SK-N-SH (cell line): ENCODE measurements at regions of chr12 and their contacts with region 1.

Region 1: GRCh38 chr12:18158774-18159557 is 69.0 kb upstream of the RERGL start:
- DNase-seq: peak; percentile 15
- H3K4me3 ChIP-seq: no peak overlapping the region; a peak in 1 of 4 replicates
- H3K27ac ChIP-seq: no peak overlapping the region
- H3K4me1 ChIP-seq: no peaks in the 10 kb centered on the region
- H3K27me3 ChIP-seq: no peaks in the 10 kb centered on the region
- CTCF ChIP-seq: peak; percentile 91
- EP300 ChIP-seq: no peak
- RAD21 ChIP-seq: peak; percentile 41; the same call in 1 of the 2 replicates

Region 2: GRCh38 chr12:18171571-18171970 is 12.6 kb after region 1 on chr12:
- CTCF ChIA-PET with region 1: interaction called, 14 read pairs
- POLR2A ChIA-PET with region 1: no interaction called
- DNase-seq: no peak
- H3K4me3 ChIP-seq: no peak overlapping the region
- H3K27ac ChIP-seq: no peak overlapping the region
- H3K4me1 ChIP-seq: no peaks in the 10 kb centered on the region
- H3K27me3 ChIP-seq: no peaks in the 10 kb centered on the region; the same call in 1 of the 2 replicates
- CTCF ChIP-seq: no peak
- EP300 ChIP-seq: no peak
- RAD21 ChIP-seq: no peak